ENCODE measurements at regions of chr6 and their contacts with region 1.

Region 1: GRCh38 chr6:70241991-70242420 is 60.9 kb downstream of the COL9A1 start:
- DNase-seq: no peak
- H3K4me3 ChIP-seq: no peak overlapping the region
- CTCF ChIP-seq: no peak

Region 2: DNA sequence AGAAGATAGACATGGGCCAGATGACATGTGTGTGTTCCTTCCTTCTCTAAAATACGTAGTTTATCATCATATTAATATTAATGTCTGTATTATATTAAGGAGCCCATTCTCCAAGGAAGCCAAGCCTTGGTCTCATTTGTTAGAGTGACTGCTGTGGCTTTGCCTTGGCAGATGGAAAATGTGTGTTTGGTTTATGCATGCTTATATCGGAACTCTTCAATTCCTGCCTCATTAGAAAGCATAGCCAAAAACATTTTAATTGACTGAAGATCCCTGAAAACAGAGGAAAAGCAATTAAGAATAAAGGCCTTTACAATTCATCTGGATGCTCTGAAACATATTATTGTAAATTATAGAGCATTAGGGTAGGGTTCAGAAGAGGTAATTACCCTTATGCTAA is 45.5 kb before region 1 on chr6:
- in situ Hi-C with region 1: no loop called
- DNase-seq: no peak
- H3K4me3 ChIP-seq: no peak overlapping the region
- CTCF ChIP-seq: no peak

Region 3: GRCh38 chr6:70208235-70208790 is 33.7 kb before region 1 on chr6:
- in situ Hi-C with region 1: loop called (anchors 5 kb)
- DNase-seq: no peak
- H3K4me3 ChIP-seq: no peak overlapping the region
- CTCF ChIP-seq: no peak

Region 4: DNA sequence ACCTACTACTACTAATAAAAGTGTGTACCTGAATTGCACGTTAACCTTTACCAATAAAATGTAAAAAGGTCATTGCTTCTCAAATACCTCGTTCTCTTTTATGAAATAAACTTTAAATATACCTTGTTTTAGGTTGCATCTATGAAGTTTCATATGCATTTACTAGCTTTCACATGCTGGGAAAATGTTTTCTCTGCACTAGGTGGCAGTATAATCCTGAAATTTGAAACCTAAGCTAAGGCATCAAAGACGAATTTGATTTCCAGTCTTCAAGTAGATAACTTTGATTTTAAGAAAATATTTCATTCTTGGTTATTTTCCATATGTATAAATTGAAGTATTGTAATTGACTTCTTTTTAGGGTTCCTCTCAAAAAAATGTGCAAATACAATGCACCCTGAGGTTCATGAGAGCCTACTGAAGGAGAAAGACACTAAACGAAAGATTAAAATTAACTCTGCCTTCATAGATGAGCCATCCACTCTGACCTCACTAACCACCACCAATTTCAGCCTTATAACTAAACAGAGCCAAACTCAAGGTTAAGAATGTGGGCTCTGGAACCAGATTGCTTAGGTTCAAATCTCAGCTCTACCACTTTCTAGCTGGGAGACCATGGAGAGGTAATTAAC is 68.2 kb after region 1 on chr6:
- in situ Hi-C with region 1: no loop called
- DNase-seq: peak; percentile 31
- H3K4me3 ChIP-seq: no peak overlapping the region
- CTCF ChIP-seq: peak; percentile 54